Activated T-helper 1 cell treated with anti-CD3 and anti-CD28 coated beads, Interleukin-12 subunit alpha, Interleukin-12 subunit beta, Interleukin-2, Interleukin-4 antibody, amounts not matched to agents 30 ng/mL and 10 ng/mL and 1 ng/mL, durations not matched to agents 14 hours and 24 hours and 36 hours (primary cell): ENCODE measurements at regions of chr2 and their contacts with region 1.

Region 1: DNA sequence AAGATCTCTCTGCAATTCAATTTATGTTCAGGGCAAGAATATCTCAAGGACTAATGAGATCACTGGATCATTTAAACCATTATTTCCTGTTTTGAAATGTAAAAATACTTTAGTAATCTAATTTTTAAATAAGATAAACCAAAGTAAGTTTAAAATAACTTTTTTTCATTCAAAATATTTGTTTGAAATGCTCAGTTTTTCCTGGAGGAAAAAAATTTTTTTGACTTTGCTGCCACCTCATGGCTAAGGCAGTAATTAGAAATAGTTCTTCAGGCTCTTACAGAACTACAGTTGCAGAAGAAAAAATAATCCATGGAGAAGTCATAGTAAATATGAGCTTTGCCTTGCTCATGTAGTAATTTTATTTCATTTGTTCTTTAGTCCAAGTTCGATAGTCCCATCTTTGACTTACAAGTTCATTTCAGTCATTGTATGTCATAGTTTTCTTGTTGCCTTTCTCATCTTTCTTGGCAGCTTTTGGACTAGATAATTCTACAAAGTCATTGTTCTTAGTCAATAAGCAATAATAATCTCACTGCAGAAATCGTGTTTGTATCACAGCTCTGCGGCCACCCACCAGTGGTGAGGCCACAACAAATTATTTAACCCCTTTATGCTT is 127.4 kb downstream of the DPP4 start:
- DNase-seq: no peak
- H3K4me3 Mint-ChIP-seq: no peak overlapping the region
- H3K27ac Mint-ChIP-seq: peak overlapping the region; percentile 15
- H3K4me1 Mint-ChIP-seq: peaks cover 56% of the 10 kb centered on the region
- H3K27me3 Mint-ChIP-seq: peaks cover 6% of the 10 kb centered on the region

Region 2: GRCh38 chr2:161414042-161415033 is 532.3 kb before region 1 on chr2:
- intact Hi-C with region 1: loop called (anchors 1 kb)
- DNase-seq: no peak
- H3K4me3 Mint-ChIP-seq: peak overlapping the region; percentile 75
- H3K27ac Mint-ChIP-seq: no peak overlapping the region
- H3K4me1 Mint-ChIP-seq: peaks cover 53% of the 10 kb centered on the region
- H3K27me3 Mint-ChIP-seq: peaks cover 52% of the 10 kb centered on the region

Region 3: GRCh38 chr2:161426922-161427663 is 519.5 kb before region 1 on chr2:
- intact Hi-C with region 1: loop called (anchors 5 kb)
- DNase-seq: no peak
- H3K4me3 Mint-ChIP-seq: peak overlapping the region; percentile 74
- H3K27ac Mint-ChIP-seq: peak overlapping the region; percentile 72
- H3K4me1 Mint-ChIP-seq: peaks cover 29% of the 10 kb centered on the region
- H3K27me3 Mint-ChIP-seq: peaks cover 84% of the 10 kb centered on the region

Region 4: DNA sequence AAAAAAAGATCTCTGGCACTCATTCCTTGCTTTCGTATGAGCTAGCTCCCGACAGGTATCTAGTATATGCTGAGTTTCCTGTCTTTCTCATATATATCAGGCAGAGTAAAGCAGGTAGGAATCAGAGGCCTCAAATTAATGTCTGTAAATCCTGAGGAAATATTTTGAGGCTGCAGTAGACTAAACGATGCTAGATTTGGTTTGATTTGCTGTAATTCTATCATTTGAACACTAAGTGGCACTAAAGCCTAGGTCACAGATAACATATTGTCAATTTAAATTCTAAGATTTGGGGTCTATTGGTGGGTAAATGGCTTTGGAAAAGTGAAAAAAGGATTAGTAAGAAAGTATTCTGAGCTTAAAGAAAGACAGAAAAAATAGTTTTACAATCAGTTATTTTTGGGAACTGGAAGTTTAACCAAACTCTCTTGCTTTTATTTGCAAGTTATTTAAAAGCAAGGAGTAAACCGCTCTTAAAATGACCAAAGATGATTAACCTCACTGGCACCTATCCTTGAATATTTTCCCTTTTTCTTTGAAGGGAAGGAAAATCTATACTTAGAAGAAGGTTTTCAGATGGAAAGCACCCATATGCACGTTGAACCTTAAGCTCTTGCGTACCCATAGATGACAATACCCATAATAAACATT is 360.0 kb before region 1 on chr2:
- intact Hi-C with region 1: loop called (anchors 1 kb)
- DNase-seq: no peak
- H3K4me3 Mint-ChIP-seq: no peak overlapping the region
- H3K27ac Mint-ChIP-seq: no peak overlapping the region
- H3K4me1 Mint-ChIP-seq: peaks cover 4% of the 10 kb centered on the region
- H3K27me3 Mint-ChIP-seq: peaks cover 26% of the 10 kb centered on the region

Region 5: GRCh38 chr2:161681046-161681445 is 265.6 kb before region 1 on chr2:
- intact Hi-C with region 1: loop called (anchors 5 kb)
- DNase-seq: no peak
- H3K4me3 Mint-ChIP-seq: no peak overlapping the region
- H3K27ac Mint-ChIP-seq: no peak overlapping the region
- H3K4me1 Mint-ChIP-seq: peaks cover 8% of the 10 kb centered on the region
- H3K27me3 Mint-ChIP-seq: peaks cover 18% of the 10 kb centered on the region

Region 6: DNA sequence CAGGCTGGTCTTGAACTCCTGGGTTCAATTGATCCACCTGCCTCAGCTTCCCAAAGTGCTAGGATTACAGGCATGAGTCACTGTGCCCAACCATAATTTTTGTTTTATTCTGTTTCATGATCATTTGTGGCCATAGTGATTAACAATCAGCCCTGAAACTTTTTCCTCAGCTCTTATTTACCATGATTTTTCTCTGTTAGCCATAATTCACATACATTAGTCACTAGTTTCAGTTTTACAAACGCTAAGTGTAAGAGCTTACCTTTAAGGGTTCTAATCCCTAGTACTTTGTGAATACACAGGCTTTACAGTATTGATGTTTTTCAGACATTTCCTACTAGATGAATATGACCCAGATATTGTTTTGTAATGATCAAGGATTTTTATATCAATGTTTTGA is 88.7 kb before region 1 on chr2:
- intact Hi-C with region 1: loop called (anchors 5 kb)
- DNase-seq: no peak
- H3K4me3 Mint-ChIP-seq: no peak overlapping the region
- H3K27ac Mint-ChIP-seq: no peak overlapping the region
- H3K4me1 Mint-ChIP-seq: peaks cover 5% of the 10 kb centered on the region
- H3K27me3 Mint-ChIP-seq: no peaks in the 10 kb centered on the region